ENCODE measurements at regions of chr21 and their contacts with region 1.

Region 1: GRCh38 chr21:35204850-35205541 is 155.9 kb upstream of the RUNX1 start:
- DNase-seq: peak; percentile 88

Region 2: GRCh38 chr21:35051287-35051818 is 153.6 kb before region 1 on chr21:
- intact Hi-C with region 1: loop called (anchors 5 kb)
- DNase-seq: peak; percentile 93

Region 3: DNA sequence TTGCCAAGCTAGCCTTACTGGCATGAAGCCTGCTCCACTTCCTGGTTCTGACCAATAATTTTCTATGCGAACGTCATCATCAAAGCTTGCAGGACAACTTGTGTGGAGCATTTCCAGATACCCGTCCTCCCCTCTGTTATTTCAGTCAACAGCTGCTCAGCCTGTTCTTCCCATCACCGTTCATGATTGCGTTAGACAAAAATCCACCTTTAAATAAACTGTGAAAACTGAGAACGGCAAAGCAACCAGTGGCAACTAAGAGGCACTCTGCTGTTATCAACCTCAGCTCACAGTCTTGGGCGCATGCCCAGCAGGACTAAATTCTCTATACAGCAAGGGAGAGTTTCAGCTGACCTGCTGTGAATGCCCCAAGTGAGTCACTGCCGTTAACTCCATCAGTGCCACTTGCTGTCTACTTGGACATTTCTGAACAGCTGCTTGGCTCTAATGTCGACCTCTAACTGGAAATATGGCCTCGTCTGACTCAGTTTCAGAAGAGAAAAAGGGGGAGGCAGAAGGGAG is 51.5 kb after region 1 on chr21:
- intact Hi-C with region 1: loop called (anchors 2 kb)
- DNase-seq: peak; percentile 87

Region 4: GRCh38 chr21:35428489-35428888 is 223.5 kb after region 1 on chr21:
- intact Hi-C with region 1: loop called (anchors 5 kb)
- DNase-seq: peak; percentile 86

Region 5: DNA sequence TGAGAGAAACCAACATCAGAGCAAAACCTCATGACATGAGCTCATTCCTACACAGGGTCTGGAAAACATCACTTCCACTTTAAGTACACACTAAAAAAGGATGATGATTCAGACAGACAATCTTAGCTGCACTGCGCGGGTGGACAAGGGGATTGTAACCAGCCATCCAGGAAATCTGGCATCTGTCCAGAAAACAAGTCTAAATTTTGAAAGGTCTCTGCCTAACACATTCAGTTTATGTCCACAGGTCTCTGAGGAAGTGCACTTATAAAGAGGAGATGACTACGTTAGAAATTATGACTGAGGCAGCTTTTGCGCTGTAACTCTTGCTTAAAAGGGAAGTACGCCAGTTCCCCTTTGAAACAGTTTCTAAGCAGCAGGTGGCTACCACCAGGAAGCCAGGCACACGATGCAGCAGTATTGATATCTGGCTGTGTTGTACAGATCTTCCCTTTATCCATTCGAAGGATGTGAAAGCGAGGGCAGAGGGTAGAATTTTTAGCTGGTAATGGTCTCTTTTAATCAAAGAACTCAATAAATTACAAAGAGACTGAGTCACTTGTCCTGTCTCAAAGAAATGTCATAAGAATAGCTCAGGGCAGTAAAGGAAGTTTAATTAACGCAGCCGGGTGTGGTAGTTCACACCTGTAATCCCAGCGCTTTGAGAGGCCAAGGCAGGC is 727.4 kb after region 1 on chr21:
- intact Hi-C with region 1: loop called (anchors 10 kb)
- DNase-seq: no peak